ENCODE measurements at regions of chr2 and their contacts with region 1.

Region 1: DNA sequence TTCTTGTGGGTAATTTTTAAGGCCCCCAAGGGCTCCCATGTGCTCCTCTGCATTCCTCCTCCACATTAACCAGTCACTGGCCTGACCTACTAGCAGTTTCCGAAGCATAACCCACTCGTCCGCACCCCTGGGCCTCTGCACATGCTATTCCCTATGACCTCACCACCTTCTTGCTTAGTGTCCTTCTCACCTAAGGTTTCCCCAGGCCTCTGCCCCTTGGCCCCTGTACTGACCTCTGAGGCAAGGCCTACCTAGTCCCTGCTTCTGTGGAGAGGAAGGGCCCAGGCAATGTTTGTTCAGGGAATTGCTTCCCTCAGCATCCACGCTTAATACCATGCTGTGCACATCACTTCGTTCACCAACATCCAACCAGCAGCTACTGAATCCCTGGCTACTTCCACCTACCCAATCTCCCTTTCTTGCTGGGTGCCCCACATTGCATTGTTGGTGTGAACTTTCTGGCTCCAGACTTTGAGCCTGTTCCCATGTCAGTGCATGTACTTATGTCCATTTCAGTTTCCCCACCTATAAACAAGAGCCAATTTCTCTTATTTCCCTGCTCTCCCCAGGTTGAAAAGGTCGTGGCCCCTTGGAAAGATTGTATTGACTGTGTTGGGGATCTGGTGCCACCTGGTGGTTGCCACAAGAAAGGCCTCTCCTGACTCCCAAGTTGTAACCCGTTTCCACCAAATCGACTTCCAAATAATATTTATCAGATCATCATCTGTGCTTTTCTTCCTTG is 19.2 kb upstream of the TMEM177 start:
- DNase-seq: peak; percentile 42 to 62 (median 50)
- H3K4me3 ChIP-seq: no peak overlapping the region
- H3K27ac ChIP-seq: no peak overlapping the region
- H3K4me1 ChIP-seq: no peaks in the 10 kb centered on the region
- H3K27me3 ChIP-seq: no peaks in the 10 kb centered on the region

Region 2: GRCh38 chr2:119641562-119642258 is 18.1 kb before region 1 on chr2:
- CTCF ChIA-PET with region 1: interaction called, 148 read pairs
- POLR2A ChIA-PET with region 1: no interaction called
- DNase-seq: peak; percentile 63 to 82 (median 78)
- H3K4me3 ChIP-seq: no peak overlapping the region
- H3K27ac ChIP-seq: no peak overlapping the region
- H3K4me1 ChIP-seq: peaks cover 0 to 6% (median 0%) of the 10 kb centered on the region in 4 experiments
- H3K27me3 ChIP-seq: peaks cover 0 to 3% (median 0%) of the 10 kb centered on the region in 5 experiments